ENCODE measurements at regions of chr9 and their contacts with region 1.

Region 1: DNA sequence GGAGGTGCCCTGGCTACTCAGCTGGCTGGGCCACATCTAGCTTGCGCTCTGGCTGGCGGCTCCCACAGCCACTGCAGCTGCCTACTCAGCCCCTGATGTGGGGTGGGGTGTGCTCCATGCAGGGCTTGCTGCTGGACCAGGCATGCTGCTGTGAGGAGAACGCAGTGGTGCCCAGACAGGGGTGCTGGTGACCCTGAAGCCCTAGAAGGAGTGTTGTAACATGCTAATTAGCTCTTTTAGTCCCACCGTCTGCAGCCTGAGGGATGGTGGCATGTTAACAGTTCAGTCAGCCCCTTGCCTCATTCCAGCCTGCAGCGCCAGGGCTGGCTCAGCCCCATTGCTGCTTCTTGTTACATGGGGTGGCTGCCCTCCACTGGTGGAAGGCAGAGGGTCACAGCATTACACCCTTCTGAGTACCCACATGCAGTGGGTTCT is 642.3 kb downstream of the DMRTA1 start:
- DNase-seq: no peak
- H3K4me3 ChIP-seq: no peak overlapping the region
- H3K27ac ChIP-seq: no peak overlapping the region
- H3K4me1 ChIP-seq: no peaks in the 10 kb centered on the region
- H3K27me3 ChIP-seq: no peaks in the 10 kb centered on the region
- CTCF ChIP-seq: no peak
- POLR2A ChIP-seq: no peak

Region 2: DNA sequence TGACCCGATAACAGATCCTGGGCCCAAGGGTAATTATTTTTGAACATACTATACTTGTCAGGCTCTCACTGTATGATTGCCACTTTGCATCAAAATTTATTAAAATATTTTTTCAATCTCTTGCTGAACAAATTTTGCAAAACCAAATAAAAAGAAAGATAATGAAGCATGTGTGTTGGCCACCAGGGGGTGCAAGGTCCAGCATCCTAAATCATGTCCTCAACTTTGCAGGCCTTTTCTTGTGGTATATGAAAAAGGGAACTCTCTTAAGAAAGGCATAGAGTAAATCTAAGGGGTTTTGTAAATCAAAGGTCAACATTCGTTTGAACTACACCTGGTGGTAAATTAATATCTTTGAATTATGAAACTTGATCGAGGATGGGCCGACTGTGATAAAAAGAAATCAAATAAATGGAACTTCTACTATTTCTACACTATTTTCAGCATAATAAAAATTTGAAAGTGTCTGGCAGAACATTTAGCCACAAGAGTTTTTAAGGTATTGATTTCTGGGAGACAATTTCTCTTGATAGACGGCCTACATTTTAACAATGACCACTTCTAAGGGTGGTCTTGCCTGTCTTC is 34.2 kb after region 1 on chr9:
- intact Hi-C with region 1: no loop called
- DNase-seq: no peak
- H3K4me3 ChIP-seq: no peak overlapping the region
- H3K27ac ChIP-seq: no peak overlapping the region
- H3K4me1 ChIP-seq: no peaks in the 10 kb centered on the region
- H3K27me3 ChIP-seq: no peaks in the 10 kb centered on the region
- CTCF ChIP-seq: peak; percentile 23 to 49 (median 26)
- POLR2A ChIP-seq: no peak

Region 3: DNA sequence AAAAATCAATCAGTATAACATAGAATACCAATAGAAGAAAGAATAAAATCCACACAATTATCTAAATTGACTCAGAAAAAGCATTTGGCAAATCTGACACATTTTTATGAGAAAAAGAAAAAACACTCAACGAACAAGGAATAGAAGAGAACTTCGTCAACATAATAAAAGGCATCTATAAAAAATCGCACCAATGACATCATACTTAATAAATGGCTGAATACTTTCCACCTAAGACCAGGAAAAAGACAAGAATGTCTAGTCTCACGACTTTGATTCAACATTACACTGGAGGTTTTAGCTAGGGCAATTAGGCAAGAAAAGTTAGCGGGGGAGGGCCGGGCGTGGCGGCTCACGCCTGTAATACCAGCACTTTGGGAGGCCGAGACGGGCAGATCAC is 380.2 kb after region 1 on chr9:
- intact Hi-C with region 1: no loop called
- DNase-seq: no peak
- H3K4me3 ChIP-seq: no peak overlapping the region
- H3K27ac ChIP-seq: no peak overlapping the region
- H3K4me1 ChIP-seq: no peaks in the 10 kb centered on the region
- H3K27me3 ChIP-seq: no peaks in the 10 kb centered on the region
- CTCF ChIP-seq: no peak
- POLR2A ChIP-seq: no peak

Region 4: GRCh38 chr9:24059651-24060050 is 970.7 kb after region 1 on chr9:
- intact Hi-C with region 1: loop called (anchors 10 kb)
- DNase-seq: no peak
- H3K4me3 ChIP-seq: no peak overlapping the region
- H3K27ac ChIP-seq: no peak overlapping the region
- H3K4me1 ChIP-seq: no peaks in the 10 kb centered on the region
- H3K27me3 ChIP-seq: no peaks in the 10 kb centered on the region
- CTCF ChIP-seq: no peak
- POLR2A ChIP-seq: no peak

Region 5: DNA sequence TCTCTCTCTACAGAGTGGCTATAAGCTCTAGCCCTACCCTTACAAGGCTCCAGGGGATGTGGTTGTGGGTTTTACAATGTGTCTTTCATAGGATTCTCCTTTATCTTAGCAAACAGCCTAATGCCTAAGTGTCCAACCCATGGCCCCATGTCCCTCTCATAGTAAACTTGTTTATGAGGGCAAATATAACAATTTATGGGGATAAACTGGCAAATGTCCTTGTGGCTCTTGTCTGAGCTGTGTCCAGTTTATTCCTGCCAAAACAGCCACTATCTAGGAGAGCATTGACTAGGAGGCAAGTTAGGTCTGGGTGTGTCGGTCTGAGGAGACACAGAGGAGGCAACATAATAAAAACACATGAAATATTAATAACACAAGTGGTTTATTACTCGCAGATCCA is 1121.7 kb after region 1 on chr9:
- intact Hi-C with region 1: no loop called
- DNase-seq: no peak
- H3K4me3 ChIP-seq: no peak overlapping the region
- H3K27ac ChIP-seq: no peak overlapping the region
- H3K4me1 ChIP-seq: no peaks in the 10 kb centered on the region
- H3K27me3 ChIP-seq: no peaks in the 10 kb centered on the region
- CTCF ChIP-seq: no peak
- POLR2A ChIP-seq: no peak

Measured in breast epithelium (tissue), 4 donors.